ENCODE measurements at regions of chr19 and their contacts with region 1.

Region 1: GRCh38 chr19:39765091-39766076 is 13.3 kb upstream of the LEUTX start:
- DNase-seq: no peak
- ATAC-seq: no peak
- H3K4me3 ChIP-seq: no peak overlapping the region
- H3K27ac ChIP-seq: no peak overlapping the region
- H3K4me1 ChIP-seq: no peaks in the 10 kb centered on the region
- H3K27me3 ChIP-seq: no peaks in the 10 kb centered on the region

Region 2: GRCh38 chr19:39554701-39555311 is 210.6 kb before region 1 on chr19:
- intact Hi-C with region 1: loop called in 1 of 2 experiments (anchors 5 kb)
- DNase-seq: no peak
- ATAC-seq: no peak
- H3K4me3 ChIP-seq: no peak overlapping the region
- H3K27ac ChIP-seq: no peak overlapping the region
- H3K4me1 ChIP-seq: no peaks in the 10 kb centered on the region
- H3K27me3 ChIP-seq: no peaks in the 10 kb centered on the region

Region 3: GRCh38 chr19:39671738-39672363 is 93.5 kb before region 1 on chr19:
- intact Hi-C with region 1: no loop called
- DNase-seq: no peak
- ATAC-seq: no peak
- H3K4me3 ChIP-seq: no peak overlapping the region
- H3K27ac ChIP-seq: no peak overlapping the region
- H3K4me1 ChIP-seq: no peaks in the 10 kb centered on the region
- H3K27me3 ChIP-seq: no peaks in the 10 kb centered on the region

Measured in aorta (tissue), 5 donors.